B cell (primary cell): ENCODE measurements at regions of chr19 and their contacts with region 1.

Region 1: GRCh38 chr19:46788262-46788967 is at the start of gene SLC1A5:
- DNase-seq: peak; percentile 97
- ATAC-seq: peak; percentile 86
- H3K4me3 ChIP-seq: peak within 1 kb of the TSS; percentile 67 to 95 (median 79)
- H3K4me3 Mint-ChIP-seq: peak within 1 kb of the TSS; percentile 93
- H3K27ac ChIP-seq: peak within 1 kb of the TSS; percentile 40 to 47
- H3K27ac Mint-ChIP-seq: peak within 1 kb of the TSS; percentile 98
- H3K4me1 ChIP-seq: peaks cover 32 to 51% of the 10 kb centered on the region in 2 donors
- H3K4me1 Mint-ChIP-seq: peaks cover 52% of the 10 kb centered on the region
- H3K27me3 ChIP-seq: no peaks in the 10 kb centered on the region
- H3K27me3 Mint-ChIP-seq: no peaks in the 10 kb centered on the region
- CTCF ChIP-seq: no peak
- total RNA-seq, gene SLC1A5: 35.2 and 37.3 TPM in 2 replicates

Region 2: DNA sequence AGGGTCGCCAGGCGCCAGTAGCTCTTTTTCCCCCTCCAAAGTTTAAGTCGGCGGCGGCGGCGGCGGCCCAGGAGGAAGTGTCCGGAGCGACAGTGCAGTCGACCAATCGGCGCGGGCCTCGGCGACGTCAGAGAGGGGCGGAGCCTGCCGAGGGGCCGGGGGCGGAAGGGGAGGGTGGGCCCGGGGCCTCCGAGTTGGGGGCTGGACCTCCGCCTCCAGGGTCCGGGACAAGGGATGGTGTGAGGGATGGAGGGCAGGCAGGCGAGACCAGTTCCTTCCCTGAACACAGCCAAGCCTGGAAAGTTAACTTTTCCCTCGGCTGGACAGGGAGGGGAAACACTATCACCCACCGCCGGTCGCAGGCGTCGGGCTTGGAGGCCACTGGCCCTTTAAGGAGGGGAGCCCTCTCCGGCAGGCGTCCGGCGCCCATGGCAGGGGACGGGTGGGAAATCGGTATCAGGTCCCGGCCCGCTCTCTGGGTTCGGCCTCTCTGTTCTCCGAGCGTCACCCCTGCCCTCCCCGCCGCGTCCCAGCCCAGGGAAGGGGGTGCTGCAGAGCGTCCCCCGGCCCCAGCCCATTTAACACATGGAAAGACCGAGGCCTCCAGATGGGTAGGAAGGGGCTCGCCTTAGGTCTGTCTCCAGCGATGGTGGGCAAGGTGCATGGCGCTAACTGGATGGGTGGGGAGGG is 71.2 kb before region 1 on chr19 and contains the start of gene PRKD2:
- CTCF ChIA-PET with region 1: no interaction called
- POLR2A ChIA-PET with region 1: interaction called, 3 read pairs
- intact Hi-C with region 1: loop called (anchors 2 kb)
- DNase-seq: peak; percentile 89
- ATAC-seq: peak; percentile 48
- H3K4me3 ChIP-seq: peak within 1 kb of the TSS; percentile 77 to 99 (median 92)
- H3K4me3 Mint-ChIP-seq: peak within 1 kb of the TSS; percentile 97
- H3K27ac ChIP-seq: peak within 1 kb of the TSS; percentile 89 to 92
- H3K27ac Mint-ChIP-seq: peak within 1 kb of the TSS; percentile 95
- H3K4me1 ChIP-seq: peaks cover 58 to 75% of the 10 kb centered on the region in 2 donors
- H3K4me1 Mint-ChIP-seq: peaks cover 66% of the 10 kb centered on the region
- H3K27me3 ChIP-seq: no peaks in the 10 kb centered on the region
- H3K27me3 Mint-ChIP-seq: no peaks in the 10 kb centered on the region
- CTCF ChIP-seq: no peak
- total RNA-seq, gene PRKD2: 185 and 192 TPM in 2 replicates

Region 3: GRCh38 chr19:46753420-46754155 is 34.8 kb before region 1 on chr19:
- CTCF ChIA-PET with region 1: interaction called, 27 read pairs
- POLR2A ChIA-PET with region 1: no interaction called
- intact Hi-C with region 1: loop called (anchors 5 kb)
- DNase-seq: peak; percentile 78
- ATAC-seq: peak; percentile 82
- H3K4me3 ChIP-seq: no peak overlapping the region
- H3K4me3 Mint-ChIP-seq: no peak overlapping the region
- H3K27ac ChIP-seq: no peak overlapping the region
- H3K27ac Mint-ChIP-seq: peak overlapping the region; percentile 32
- H3K4me1 ChIP-seq: peaks cover 0 to 7% of the 10 kb centered on the region in 2 donors
- H3K4me1 Mint-ChIP-seq: peaks cover 18% of the 10 kb centered on the region
- H3K27me3 ChIP-seq: no peaks in the 10 kb centered on the region
- H3K27me3 Mint-ChIP-seq: no peaks in the 10 kb centered on the region
- CTCF ChIP-seq: peak; percentile 65

Region 4: GRCh38 chr19:46850228-46851203 is 62.1 kb after region 1 on chr19 and contains the start of gene AP2S1:
- CTCF ChIA-PET with region 1: no interaction called
- POLR2A ChIA-PET with region 1: no interaction called
- intact Hi-C with region 1: loop called (anchors 1 kb)
- DNase-seq: peak; percentile 95
- ATAC-seq: peak; percentile 93
- H3K4me3 ChIP-seq: peak within 1 kb of the TSS; percentile 59 to 89 (median 82)
- H3K4me3 Mint-ChIP-seq: peak within 1 kb of the TSS; percentile 98
- H3K27ac ChIP-seq: peak within 1 kb of the TSS; percentile 58 to 81
- H3K27ac Mint-ChIP-seq: peak within 1 kb of the TSS; percentile 86
- H3K4me1 ChIP-seq: peaks cover 17 to 24% of the 10 kb centered on the region in 2 donors
- H3K4me1 Mint-ChIP-seq: peaks cover 32% of the 10 kb centered on the region
- H3K27me3 ChIP-seq: no peaks in the 10 kb centered on the region
- H3K27me3 Mint-ChIP-seq: no peaks in the 10 kb centered on the region
- CTCF ChIP-seq: no peak
- total RNA-seq, gene AP2S1: 47.2 and 49.3 TPM in 2 replicates

Region 5: GRCh38 chr19:47273313-47273977 is 485.0 kb after region 1 on chr19:
- CTCF ChIA-PET with region 1: no interaction called
- POLR2A ChIA-PET with region 1: interaction called, 3 read pairs
- intact Hi-C with region 1: loop called (anchors 5 kb)
- DNase-seq: peak; percentile 91
- ATAC-seq: peak; percentile 56
- H3K4me3 ChIP-seq: peak overlapping the region; percentile 54 to 99 (median 96)
- H3K4me3 Mint-ChIP-seq: peak overlapping the region; percentile 97
- H3K27ac ChIP-seq: peak overlapping the region; percentile 94 to 98
- H3K27ac Mint-ChIP-seq: peak overlapping the region; percentile 99
- H3K4me1 ChIP-seq: peaks cover 12 to 22% of the 10 kb centered on the region in 2 donors
- H3K4me1 Mint-ChIP-seq: peaks cover 22% of the 10 kb centered on the region
- H3K27me3 ChIP-seq: no peaks in the 10 kb centered on the region
- H3K27me3 Mint-ChIP-seq: no peaks in the 10 kb centered on the region
- CTCF ChIP-seq: no peak